ENCODE measurements at regions of chr7 and their contacts with region 1.

Region 1: GRCh38 chr7:992709-993607 is 10.0 kb downstream of the CYP2W1 start:
- DNase-seq: peak; percentile 91
- H3K4me3 ChIP-seq: no peak overlapping the region
- H3K27ac ChIP-seq: no peak overlapping the region
- H3K27me3 ChIP-seq: peaks cover 4% of the 10 kb centered on the region
- CTCF ChIP-seq: peak; percentile 99

Region 2: GRCh38 chr7:974820-975681 is 17.9 kb before region 1 on chr7 and contains the start of gene COX19:
- CTCF ChIA-PET with region 1: interaction called, 22 read pairs
- POLR2A ChIA-PET with region 1: interaction called, 6 read pairs
- DNase-seq: peak; percentile 68
- H3K4me3 ChIP-seq: peak within 1 kb of the TSS; percentile 93
- H3K27ac ChIP-seq: peak within 1 kb of the TSS; percentile 83
- H3K27me3 ChIP-seq: no peaks in the 10 kb centered on the region
- CTCF ChIP-seq: no peak
- polyA plus RNA-seq, gene COX19: 6.5 and 6.8 TPM in 2 replicates

Region 3: DNA sequence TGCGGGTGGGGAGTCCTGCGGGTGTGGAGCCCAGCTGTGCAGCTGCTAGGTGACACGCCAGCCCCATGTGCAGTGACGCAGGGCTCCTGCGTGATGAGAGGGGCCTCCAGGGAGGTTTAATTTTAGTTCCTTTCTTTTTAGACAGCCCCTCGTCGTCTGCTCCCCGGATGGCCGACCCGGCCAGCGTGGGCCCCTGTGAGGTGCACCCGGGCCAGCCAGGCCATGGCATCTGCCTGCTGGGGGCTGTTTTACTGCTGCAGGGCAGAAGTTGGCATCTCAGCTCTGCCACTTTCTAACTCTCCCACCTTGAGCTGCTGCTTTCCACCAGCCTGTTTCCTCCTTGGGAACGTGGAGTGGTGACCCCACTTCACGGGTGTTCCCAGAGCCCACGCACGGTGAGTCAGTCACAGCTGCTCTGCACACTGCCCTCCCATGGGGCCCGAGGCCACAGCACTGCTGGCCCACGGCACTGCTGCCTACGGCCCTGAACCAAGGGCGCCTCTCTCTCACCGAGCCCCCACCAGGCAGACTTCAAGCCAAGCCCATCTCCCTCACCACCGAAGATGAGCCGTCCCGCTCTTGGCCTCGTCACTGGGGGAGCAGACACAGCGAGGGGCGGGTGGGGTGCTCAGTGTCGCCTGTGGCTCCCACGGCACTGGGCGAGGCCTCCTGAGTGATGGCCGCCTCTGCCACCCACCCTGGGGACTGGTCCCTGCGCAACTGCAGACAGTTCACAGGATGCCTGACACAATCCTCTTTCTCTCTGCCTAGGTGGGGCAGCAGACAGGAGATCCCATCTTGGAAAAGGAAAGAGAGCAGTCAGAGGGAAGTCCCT is 11.3 kb after region 1 on chr7:
- CTCF ChIA-PET with region 1: no interaction called
- POLR2A ChIA-PET with region 1: no interaction called
- DNase-seq: no peak
- H3K4me3 ChIP-seq: no peak overlapping the region
- H3K27ac ChIP-seq: no peak overlapping the region
- H3K27me3 ChIP-seq: no peaks in the 10 kb centered on the region
- CTCF ChIP-seq: no peak

Region 4: GRCh38 chr7:1028031-1028770 is 35.2 kb after region 1 on chr7:
- CTCF ChIA-PET with region 1: interaction called, 10 read pairs
- POLR2A ChIA-PET with region 1: no interaction called
- DNase-seq: peak; percentile 48
- H3K4me3 ChIP-seq: peak overlapping the region; percentile 65
- H3K27ac ChIP-seq: peak overlapping the region; percentile 91
- H3K27me3 ChIP-seq: no peaks in the 10 kb centered on the region
- CTCF ChIP-seq: no peak

Region 5: DNA sequence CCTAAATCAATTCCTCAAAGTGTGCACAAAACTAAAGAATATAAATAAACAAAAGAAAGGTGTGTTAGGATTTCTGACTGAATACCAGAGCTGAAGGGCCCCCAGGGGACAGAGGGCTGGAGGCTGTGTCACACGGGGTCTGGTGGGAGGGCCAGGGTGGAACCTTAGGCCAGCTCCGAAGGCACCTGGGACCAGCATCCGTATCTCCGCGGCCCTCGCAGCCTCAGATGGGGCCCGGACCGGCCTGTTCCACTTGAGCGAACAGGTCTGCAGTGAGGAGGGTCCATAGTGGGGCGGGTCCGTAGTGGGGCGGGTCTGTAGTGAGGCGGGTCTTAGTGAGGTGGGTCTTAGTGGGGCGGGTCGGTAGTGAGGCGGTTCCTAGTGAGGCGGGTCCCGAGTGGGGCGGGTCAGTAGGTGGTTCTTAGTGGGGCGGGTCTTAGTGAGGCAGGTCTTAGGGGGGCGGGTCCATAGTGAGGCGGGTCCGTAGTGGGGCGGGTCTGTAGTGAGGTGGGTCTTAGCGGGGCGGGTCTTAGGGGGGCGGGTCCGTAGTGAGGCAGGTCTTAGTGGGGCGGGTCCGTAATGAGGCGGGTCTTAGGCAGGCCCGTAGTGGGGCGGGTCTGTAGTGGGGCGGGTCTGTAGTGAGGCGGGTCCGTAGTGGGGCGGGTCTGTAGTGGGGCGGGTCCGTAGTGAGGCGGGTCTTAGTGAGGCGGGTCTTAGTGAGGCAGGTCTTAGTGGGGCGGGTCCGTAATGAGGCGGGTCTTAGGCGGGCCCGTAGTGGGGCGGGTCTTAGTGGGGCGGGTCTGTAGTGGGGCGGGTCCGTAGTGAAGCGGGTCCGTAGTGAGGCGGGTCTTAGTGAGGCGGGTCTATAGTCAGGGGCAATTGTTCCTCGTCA is 66.5 kb after region 1 on chr7:
- CTCF ChIA-PET with region 1: interaction called, 182 read pairs
- POLR2A ChIA-PET with region 1: no interaction called
- DNase-seq: no peak
- H3K4me3 ChIP-seq: no peak overlapping the region
- H3K27ac ChIP-seq: no peak overlapping the region
- H3K27me3 ChIP-seq: peaks cover 3% of the 10 kb centered on the region
- CTCF ChIP-seq: no peak

Region 6: GRCh38 chr7:1123715-1124114 is 130.8 kb after region 1 on chr7:
- CTCF ChIA-PET with region 1: interaction called, 32 read pairs
- POLR2A ChIA-PET with region 1: no interaction called
- DNase-seq: peak; percentile 61
- H3K4me3 ChIP-seq: peak overlapping the region; percentile 7; the same call in 1 of the 2 replicates
- H3K27ac ChIP-seq: peak overlapping the region; percentile 70
- H3K27me3 ChIP-seq: no peaks in the 10 kb centered on the region
- CTCF ChIP-seq: peak; percentile 75

Measured in AG04450 (cell line).